Head of caudate nucleus (tissue), 42 donors: ENCODE measurements at regions of chr1 and their contacts with region 1.

Region 1: DNA sequence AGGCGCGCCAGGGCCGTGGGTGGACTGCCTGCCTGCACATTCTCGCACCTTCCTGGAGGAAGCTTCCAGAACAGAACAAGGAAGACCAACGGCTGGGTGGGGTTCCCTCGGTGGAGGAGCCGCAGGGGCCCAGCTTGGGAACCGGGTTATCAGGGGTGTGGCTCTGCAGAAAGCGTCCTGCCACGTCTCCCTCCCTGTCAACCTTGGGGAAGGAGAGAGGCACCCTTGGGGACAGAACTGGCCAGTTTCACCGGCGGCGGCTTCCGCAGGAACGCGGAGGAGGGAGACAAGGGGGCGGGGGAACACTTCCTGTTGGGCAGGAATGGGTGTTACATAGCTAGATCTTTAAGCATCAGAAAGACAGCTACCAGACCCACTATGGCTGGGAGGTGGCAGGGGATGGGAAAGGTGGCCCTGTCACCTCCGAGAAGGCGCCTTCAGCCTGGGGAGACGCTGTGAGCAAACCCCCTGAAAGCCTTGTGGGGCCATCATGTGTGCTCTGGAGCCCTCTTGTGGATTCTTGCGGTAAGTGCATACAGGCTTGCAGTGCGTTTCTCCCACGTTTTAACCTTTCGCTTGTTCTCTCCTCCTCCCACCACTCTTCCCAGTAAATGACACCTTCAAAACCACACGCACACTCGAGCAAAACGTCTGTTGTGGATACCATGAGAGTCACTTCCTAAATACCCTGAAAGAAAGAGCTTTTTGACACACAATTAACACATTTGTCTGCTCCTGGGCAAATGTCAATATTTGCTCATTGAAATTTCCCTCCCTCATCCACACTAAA is 3.8 kb upstream of the PLEKHA6 start:
- DNase-seq: peak; percentile 49 to 88 (median 78)

Region 2: GRCh38 chr1:203861379-203862184 is 501.9 kb before region 1 on chr1 and contains the start of gene SNRPE:
- intact Hi-C with region 1: loop called (anchors 10 kb)
- DNase-seq: peak; percentile 92 to 99 (median 96)

Region 3: GRCh38 chr1:204162231-204163074 is 201.1 kb before region 1 on chr1:
- intact Hi-C with region 1: loop called (anchors 5 kb)
- DNase-seq: peak; percentile 48 to 92 (median 85)

Region 4: DNA sequence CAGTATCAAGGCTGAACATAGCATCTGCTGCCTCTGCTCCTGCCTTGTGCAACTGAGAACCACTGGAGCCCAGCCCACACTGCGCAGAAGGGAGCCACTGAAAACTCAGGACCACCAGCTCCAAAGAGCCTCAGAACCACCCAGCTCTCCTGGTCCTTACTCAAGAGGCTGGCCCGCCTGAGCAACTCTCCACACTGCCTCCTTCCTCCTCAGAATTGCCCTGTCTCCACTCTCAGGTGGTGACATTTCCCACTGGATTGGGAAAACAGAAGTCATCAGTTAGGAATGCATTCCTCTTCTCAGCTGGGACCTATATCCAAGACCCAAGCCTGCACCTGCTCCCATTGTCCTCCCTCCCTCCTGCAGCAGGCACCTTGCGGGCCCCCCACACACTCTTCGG is 160.2 kb before region 1 on chr1:
- intact Hi-C with region 1: no loop called
- DNase-seq: no peak

Region 5: GRCh38 chr1:204213668-204214662 is 149.6 kb before region 1 on chr1 and contains the start of gene GOLT1A:
- intact Hi-C with region 1: loop called (anchors 5 kb)
- DNase-seq: peak; percentile 61 to 91 (median 80)

Region 6: GRCh38 chr1:204257954-204258752 is 105.4 kb before region 1 on chr1:
- intact Hi-C with region 1: loop called (anchors 5 kb)
- DNase-seq: peak in 41 of 42 donors; percentile 40 to 87 (median 71)

Region 7: DNA sequence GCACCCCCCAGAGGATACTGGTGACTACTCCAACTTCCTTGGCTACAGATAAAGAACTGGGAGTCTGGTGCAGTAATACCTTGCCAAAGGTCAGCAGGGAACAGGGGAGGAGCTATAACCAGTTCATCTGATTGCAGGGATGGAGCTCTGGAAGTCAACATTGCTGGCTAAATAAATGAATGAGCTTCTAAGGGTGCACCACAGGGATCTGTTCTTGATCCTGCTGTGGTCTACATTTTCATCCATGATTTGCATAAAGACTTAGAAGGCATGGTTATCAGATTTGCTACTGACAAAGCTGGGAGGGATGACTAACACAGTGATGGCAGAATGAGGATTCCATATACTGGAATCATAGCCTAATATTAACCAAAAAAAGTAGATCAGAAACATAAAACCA is 22.1 kb before region 1 on chr1:
- intact Hi-C with region 1: no loop called
- DNase-seq: no peak